ENCODE measurements at regions of chr12 and their contacts with region 1.

Region 1: DNA sequence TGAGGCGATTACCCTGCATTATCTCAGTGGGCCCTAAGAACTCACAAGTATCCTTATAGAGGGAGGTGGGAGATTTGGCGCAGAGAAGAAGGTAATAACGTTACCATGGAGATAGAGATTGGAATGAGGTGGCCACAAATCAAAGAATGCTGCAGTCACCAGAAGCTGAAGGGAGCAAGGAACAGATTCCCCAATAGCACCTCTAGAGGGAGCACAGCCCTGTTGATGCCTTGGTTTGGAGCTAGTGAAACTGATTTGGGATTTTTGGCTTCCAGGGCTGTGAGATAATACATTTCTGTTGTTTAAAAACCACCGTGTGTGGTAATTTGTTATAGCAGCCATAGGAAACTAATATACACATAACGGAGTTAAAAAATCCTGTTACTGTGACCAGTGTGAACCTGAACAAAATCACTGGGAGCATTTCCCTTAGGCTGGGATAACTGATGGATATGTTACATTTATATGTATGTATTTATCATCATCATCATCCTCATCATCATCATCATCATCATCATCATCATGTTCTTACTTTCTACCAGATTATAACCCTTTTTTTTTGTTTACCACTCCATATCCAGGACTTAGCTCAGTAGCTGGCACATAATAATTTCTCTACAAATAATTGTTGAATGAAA is 100.3 kb downstream of the LIN7A start:
- DNase-seq: peak; percentile 16
- H3K4me3 ChIP-seq: no peak overlapping the region
- CTCF ChIP-seq: peak; percentile 86

Region 2: DNA sequence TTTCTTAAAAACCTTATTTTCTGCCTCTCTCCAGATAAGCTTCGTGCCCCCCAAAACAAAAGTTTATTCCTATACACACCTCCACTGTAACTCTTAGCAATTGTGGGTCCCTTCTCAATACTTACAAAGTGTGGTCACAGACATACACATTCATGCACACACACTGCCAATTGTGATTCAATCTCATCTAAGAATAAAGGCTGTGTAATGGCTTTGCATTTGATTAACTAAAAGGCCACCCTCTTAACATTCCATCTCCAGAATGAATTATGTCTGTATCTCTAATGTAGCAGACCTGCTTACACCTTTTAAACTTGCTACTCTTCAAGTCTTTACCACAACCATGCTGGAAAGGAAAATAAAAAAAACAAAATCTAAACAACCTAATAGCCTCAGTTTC is 71.3 kb before region 1 on chr12:
- CTCF ChIA-PET with region 1: no interaction called
- POLR2A ChIA-PET with region 1: no interaction called
- DNase-seq: no peak
- H3K4me3 ChIP-seq: no peak overlapping the region
- CTCF ChIP-seq: no peak

Region 3: DNA sequence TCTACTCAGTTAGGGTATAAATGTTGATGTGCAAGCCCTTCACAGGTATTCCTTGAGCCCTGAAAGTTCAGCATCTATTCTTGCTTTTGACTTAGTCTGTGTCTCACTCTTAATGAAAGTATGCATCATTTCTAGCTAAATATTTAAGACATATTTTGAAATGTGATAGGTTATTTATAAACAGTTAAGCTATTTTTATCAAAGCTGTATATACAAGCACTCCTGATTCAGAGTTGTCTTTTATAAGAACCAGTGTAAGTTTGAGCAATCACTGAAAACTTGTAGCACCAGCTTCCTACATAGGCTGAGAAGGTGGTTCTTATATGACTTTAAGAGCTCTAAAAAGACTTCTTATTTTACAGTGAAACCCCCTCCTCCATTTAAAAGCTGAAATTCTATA is 22.1 kb before region 1 on chr12:
- CTCF ChIA-PET with region 1: interaction called, 11 read pairs
- POLR2A ChIA-PET with region 1: no interaction called
- DNase-seq: no peak
- H3K4me3 ChIP-seq: no peak overlapping the region
- CTCF ChIP-seq: no peak

Region 4: DNA sequence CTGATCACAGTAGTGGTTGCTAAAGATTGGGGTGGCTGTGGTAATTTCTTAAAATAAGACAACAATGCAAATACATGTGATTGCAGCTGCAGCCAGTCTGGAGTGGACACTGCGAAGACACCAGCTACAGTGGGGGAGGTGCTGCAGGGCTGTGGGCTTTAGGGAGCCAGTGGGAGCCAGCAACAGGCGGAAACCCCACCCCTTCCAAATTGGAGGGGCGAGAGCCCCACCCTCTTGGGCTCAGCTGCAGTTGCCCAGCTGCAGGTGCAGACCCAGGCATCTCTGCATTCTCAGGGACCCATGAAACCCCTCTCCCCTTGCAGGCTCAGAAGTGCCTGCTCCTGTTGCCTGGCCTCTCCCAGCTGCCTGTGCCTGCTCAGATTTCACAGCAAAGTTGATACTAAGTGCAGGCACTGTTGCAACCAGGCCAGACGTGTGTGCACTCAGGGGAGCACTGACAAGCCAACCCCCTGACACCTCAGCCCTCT is 15.9 kb before region 1 on chr12:
- CTCF ChIA-PET with region 1: interaction called, 13 read pairs
- POLR2A ChIA-PET with region 1: no interaction called
- DNase-seq: no peak
- H3K4me3 ChIP-seq: no peak overlapping the region
- CTCF ChIP-seq: no peak

Region 5: DNA sequence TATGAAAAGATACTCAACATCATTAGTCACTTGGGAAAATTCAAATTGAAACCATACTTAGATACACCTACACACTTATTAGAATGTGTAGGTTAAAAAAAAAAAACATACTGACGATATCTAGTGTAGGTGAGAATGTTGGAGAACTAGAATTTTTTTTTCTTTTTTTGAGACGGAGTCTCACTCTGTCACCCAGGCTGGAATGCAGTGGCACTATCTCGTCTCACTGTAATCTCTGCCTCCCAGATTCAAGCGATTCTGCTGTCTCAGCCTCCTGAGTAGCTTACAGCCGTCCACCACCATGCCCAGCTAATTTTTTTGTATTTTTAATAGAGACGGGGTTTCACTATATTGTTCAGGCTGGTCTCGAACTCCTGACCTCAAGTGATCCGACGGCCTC is 16.1 kb after region 1 on chr12:
- CTCF ChIA-PET with region 1: interaction called, 47 read pairs
- POLR2A ChIA-PET with region 1: no interaction called
- DNase-seq: no peak
- H3K4me3 ChIP-seq: no peak overlapping the region
- CTCF ChIP-seq: no peak

Region 6: DNA sequence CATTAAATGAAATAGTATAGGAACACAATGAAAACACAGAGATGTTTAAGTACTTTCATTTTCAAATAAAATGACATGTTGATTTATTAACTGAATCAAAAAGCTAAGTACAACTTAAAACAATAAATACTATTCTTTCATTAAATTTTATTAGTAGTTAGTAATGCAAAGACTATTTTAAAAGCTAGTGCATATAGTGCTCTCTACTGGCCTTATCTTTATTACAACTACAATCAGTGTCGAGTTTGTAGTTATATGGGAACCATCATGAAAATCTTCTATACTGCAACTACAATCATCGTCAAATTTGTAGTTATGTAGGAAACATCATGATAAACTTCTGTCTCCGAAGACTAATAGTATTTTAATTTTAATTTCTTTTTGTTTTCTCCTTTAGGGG is 109.1 kb after region 1 on chr12:
- CTCF ChIA-PET with region 1: interaction called, 23 read pairs
- POLR2A ChIA-PET with region 1: no interaction called
- DNase-seq: no peak
- H3K4me3 ChIP-seq: no peak overlapping the region
- CTCF ChIP-seq: peak; percentile 9